Activated naive CD4-positive, alpha-beta T cell treated with anti-CD3 and anti-CD28 coated beads for 36 hours (primary cell): ENCODE measurements at regions of chr3 and their contacts with region 1.

Region 1: GRCh38 chr3:45995236-45996192 is at the start of gene FYCO1:
- DNase-seq: peak; percentile 94
- H3K4me3 Mint-ChIP-seq: peak within 1 kb of the TSS; percentile 82
- H3K27ac Mint-ChIP-seq: peak within 1 kb of the TSS; percentile 81
- H3K4me1 Mint-ChIP-seq: peaks cover 31% of the 10 kb centered on the region
- H3K27me3 Mint-ChIP-seq: peaks cover 3% of the 10 kb centered on the region
- total RNA-seq, gene FYCO1: 10.2 to 10.5 TPM

Region 2: DNA sequence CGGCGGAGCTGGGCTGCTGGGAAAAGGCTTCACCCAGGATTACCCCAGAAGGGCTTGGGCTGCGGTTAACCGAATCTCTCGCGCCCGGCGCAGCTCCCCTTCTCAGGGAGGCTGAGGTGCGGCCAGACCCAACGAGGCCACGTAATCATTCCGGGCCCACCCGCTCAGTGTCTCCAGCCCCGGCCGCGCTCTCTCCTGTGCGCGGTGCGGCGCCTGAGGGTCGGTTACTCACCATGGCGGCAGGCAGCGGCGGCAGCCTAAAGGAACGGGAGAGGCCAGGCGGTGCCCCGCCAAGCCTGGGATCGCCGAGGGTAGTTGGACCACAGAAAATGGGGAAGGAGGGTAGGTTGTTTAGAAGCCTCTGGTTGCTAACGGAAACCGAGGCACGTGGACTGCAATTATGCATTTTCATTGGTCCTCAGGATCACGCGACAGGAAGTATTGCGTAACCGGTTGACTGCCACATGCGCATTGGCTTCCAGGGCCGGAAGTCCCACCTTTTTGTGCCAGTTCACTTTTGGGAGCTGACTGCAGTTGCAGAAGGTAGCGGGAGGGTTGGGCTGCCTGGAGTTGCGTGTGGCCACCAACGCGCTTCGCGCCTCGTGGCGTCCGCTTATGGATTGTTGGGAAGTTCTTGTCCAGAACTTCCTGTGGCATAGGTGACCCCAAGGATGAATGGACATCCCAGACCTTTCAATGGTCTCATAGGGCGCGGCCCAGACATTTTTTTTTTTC is 153.6 kb before region 1 on chr3 and contains the start of gene LZTFL1:
- CTCF ChIA-PET with region 1: no interaction called
- intact Hi-C with region 1: loop called (anchors 5 kb)
- DNase-seq: peak; percentile 96
- H3K4me3 Mint-ChIP-seq: peak within 1 kb of the TSS; percentile 90
- H3K27ac Mint-ChIP-seq: peak within 1 kb of the TSS; percentile 27
- H3K4me1 Mint-ChIP-seq: peaks cover 12% of the 10 kb centered on the region
- H3K27me3 Mint-ChIP-seq: no peaks in the 10 kb centered on the region
- total RNA-seq, gene LZTFL1: 3.6 to 4.1 TPM

Region 3: GRCh38 chr3:45962033-45962432 is 33.5 kb before region 1 on chr3:
- CTCF ChIA-PET with region 1: no interaction called
- intact Hi-C with region 1: loop called (anchors 1 kb)
- DNase-seq: peak; percentile 75
- H3K4me3 Mint-ChIP-seq: no peak overlapping the region
- H3K27ac Mint-ChIP-seq: no peak overlapping the region
- H3K4me1 Mint-ChIP-seq: peaks cover 52% of the 10 kb centered on the region
- H3K27me3 Mint-ChIP-seq: no peaks in the 10 kb centered on the region